Esophagus muscularis mucosa (tissue), 4 donors: ENCODE measurements at regions of chr4 and their contacts with region 1.

Region 1: DNA sequence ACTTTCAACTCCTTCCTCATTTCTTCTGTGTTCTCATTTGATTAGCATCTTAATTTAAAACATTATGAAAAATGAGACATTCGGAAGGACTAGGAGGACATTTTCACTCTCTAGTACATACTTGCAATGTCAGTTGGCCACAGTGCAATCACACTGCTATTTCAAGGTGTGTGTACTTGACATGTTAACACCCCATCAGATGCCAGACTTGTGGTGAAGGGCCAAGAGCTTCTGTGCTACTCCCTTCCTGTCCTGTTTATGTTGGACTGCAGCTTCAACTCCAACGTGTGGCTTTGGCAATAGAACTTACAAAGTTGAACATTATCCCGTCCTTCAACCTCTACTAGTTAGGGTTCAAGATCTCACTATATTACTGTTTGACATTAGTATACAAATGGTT is 221.0 kb downstream of the PALLD start:
- DNase-seq: no peak
- H3K4me3 ChIP-seq: no peak overlapping the region
- H3K27ac ChIP-seq: peak overlapping the region; percentile 80 to 88 (median 88)
- H3K4me1 ChIP-seq: peaks cover 27 to 58% (median 44%) of the 10 kb centered on the region in 4 donors
- H3K27me3 ChIP-seq: no peaks in the 10 kb centered on the region
- CTCF ChIP-seq: no peak
- EP300 ChIP-seq: peak; percentile 75
- POLR2A ChIP-seq: no peak

Region 2: GRCh38 chr4:168758351-168758876 is 40.6 kb after region 1 on chr4:
- intact Hi-C with region 1: no loop called
- DNase-seq: no peak
- H3K4me3 ChIP-seq: no peak overlapping the region
- H3K27ac ChIP-seq: peak overlapping the region in 3 of 4 donors; percentile 1 to 51 (median 32)
- H3K4me1 ChIP-seq: peaks cover 0 to 16% (median 12%) of the 10 kb centered on the region in 4 donors
- H3K27me3 ChIP-seq: no peaks in the 10 kb centered on the region
- CTCF ChIP-seq: no peak
- EP300 ChIP-seq: no peak
- POLR2A ChIP-seq: no peak

Region 3: DNA sequence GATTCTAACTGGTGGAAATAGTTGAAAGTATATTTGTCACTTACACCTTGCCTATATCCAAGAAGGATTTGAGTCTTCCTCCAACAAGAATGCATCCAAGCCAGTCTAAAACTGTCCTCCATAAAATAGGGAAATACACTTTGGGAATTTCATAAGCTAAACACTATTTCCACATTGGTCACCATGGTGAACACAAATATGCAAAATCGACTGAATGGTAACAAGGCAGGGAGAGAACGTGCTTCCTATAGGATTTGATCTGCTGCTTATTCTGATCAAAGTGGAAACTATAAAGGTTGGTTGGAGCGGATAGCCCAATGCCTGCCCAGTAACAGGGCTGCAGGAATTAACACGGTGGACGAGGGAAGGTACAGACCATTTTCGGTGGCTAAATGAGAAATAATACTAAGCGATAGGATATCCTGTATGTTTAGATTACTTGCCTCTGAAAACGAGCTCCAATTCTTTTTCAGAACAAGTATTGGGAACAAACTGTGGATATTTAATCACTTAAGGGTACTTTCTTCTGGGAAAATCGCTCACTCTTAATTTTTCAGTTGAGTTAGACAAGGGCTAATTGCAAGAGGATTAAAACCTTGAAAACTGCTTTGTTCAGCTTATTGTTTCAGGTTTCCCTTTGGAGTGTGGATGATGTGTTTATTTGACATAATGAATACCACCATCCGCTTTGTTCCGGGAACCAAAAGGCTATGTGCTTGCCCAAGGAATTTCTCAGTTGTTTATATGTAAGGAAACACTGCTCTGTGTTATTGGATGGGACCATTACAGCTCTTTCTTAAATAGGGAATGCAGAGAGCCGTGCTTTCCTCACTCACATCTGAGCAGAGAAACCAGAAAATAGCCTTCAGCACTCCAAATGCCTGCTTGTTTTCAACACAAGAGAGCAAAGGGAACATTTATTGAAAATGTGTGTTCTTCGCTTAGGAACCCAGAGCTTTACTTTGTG is 97.8 kb after region 1 on chr4:
- intact Hi-C with region 1: loop called (anchors 5 kb)
- DNase-seq: no peak
- H3K4me3 ChIP-seq: peak overlapping the region; percentile 31 to 43 (median 39)
- H3K27ac ChIP-seq: peak overlapping the region; percentile 88 to 90 (median 90)
- H3K4me1 ChIP-seq: peaks cover 44 to 88% (median 87%) of the 10 kb centered on the region in 4 donors
- H3K27me3 ChIP-seq: no peaks in the 10 kb centered on the region
- CTCF ChIP-seq: no peak
- EP300 ChIP-seq: peak; percentile 91
- POLR2A ChIP-seq: no peak

Region 4: GRCh38 chr4:169566021-169566818 is 848.4 kb after region 1 on chr4:
- intact Hi-C with region 1: no loop called
- DNase-seq: no peak
- H3K4me3 ChIP-seq: no peak overlapping the region
- H3K27ac ChIP-seq: no peak overlapping the region
- H3K4me1 ChIP-seq: peaks cover 0 to 8% (median 4%) of the 10 kb centered on the region in 4 donors
- H3K27me3 ChIP-seq: no peaks in the 10 kb centered on the region
- CTCF ChIP-seq: peak; percentile 59 to 78 (median 60)
- EP300 ChIP-seq: no peak
- POLR2A ChIP-seq: no peak